Posterior vena cava (tissue), 2 donors: ENCODE measurements at regions of chr15 and their contacts with region 1.

Region 1: GRCh38 chr15:39066677-39067076 is 502.1 kb upstream of the RASGRP1 start:
- DNase-seq: no peak

Region 2: GRCh38 chr15:39084683-39085530 is 18.2 kb after region 1 on chr15:
- intact Hi-C with region 1: loop called in 1 of 2 experiments (anchors 1 kb)
- DNase-seq: no peak

Region 3: DNA sequence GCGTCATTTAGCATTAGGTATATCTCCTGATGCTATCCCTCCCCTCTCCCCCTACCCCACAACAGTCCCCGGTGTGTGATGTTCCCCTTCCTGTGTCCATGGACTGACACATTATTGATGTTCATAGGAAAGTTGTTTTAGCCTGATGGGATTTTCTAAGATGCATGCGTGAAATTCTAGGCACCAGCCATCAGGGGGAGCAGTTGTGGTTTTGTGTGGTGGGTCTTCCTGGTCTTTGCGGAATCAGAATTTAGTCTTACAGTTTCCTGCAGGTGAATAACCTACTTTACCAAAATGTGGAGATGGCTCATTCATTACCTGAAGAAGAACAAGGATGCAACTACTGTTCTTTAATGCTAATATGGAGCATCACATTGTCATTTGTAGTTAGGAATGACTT is 59.2 kb after region 1 on chr15:
- intact Hi-C with region 1: no loop called
- DNase-seq: no peak